Caco-2 (cell line): ENCODE measurements at regions of chr12 and their contacts with region 1.

Region 1: DNA sequence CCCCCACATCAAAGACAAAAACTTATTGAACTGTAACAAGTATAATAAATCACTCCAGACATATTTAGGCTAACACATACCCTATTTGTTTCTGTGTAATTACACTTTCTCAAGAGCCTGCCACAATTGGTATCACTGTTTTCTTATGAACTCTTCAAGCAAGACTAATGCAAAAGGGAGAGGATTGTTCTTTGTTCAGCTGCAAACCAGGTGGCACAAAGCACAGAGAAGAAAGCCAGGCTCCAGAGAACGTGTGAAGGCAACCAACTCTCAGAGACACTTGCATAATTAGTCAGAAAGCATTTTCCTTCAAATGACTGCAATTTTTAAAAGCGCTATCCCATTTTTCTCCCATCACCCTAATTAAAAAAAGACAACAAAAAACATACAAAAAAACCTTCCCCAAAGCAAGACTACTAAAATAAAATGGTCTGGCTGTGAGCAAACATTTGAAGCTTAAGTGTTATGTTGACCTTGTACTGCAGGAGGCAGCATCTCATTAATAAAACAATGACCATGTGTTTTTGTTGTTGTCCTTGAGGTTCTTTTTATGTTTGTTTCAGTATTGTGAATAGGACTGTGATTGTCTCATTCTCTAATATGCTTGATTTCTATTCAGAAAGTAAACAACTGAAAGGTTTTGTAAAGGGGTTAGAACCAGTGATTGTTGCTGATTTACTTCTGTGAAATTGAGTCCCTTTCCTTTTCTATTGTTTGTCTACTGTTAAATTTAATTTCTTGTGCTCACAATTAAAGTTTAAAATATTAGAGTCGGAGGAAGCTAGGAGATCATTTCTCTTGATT is 452.7 kb upstream of the PDE3A start:
- DNase-seq: peak in 1 of 2 experiments; percentile 20
- H3K4me3 ChIP-seq: no peak overlapping the region
- H3K4me3 Mint-ChIP-seq: no peak overlapping the region
- H3K27ac Mint-ChIP-seq: no peak overlapping the region
- H3K4me1 ChIP-seq: no peaks in the 10 kb centered on the region
- H3K4me1 Mint-ChIP-seq: peaks cover 20% of the 10 kb centered on the region
- H3K27me3 ChIP-seq: no peaks in the 10 kb centered on the region
- H3K27me3 Mint-ChIP-seq: no peaks in the 10 kb centered on the region
- CTCF ChIP-seq: peak; percentile 22 to 78

Region 2: GRCh38 chr12:19739183-19739776 is 176.3 kb before region 1 on chr12:
- CTCF ChIA-PET with region 1: no interaction called
- POLR2A ChIA-PET with region 1: no interaction called
- intact Hi-C with region 1: loop called (anchors 2 kb)
- DNase-seq: peak in 1 of 2 experiments; percentile 59
- H3K4me3 ChIP-seq: no peak overlapping the region
- H3K4me3 Mint-ChIP-seq: no peak overlapping the region
- H3K27ac Mint-ChIP-seq: no peak overlapping the region
- H3K4me1 ChIP-seq: no peaks in the 10 kb centered on the region
- H3K4me1 Mint-ChIP-seq: no peaks in the 10 kb centered on the region
- H3K27me3 ChIP-seq: no peaks in the 10 kb centered on the region
- H3K27me3 Mint-ChIP-seq: peaks cover 4% of the 10 kb centered on the region
- CTCF ChIP-seq: peak; percentile 72 to 77

Region 3: DNA sequence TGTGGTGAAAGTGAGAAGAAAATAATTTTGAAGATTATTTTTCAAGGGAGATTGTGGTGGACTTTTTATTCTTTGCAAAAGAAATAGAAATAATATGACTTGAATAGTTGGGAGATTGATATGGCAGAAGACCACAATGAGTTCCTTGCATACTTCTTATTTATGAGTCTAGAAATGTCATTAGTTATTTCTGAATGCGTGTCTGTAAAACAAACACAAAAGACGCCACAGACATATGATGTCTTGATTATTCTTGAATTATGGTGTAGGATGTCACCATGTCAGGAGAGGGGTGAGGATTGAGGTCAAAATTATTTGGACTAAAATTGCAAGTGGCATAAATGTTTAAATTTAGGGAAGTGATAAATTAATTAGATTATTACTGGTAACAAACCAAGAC is 12.1 kb after region 1 on chr12:
- CTCF ChIA-PET with region 1: no interaction called
- POLR2A ChIA-PET with region 1: no interaction called
- intact Hi-C with region 1: loop called (anchors 1 kb)
- DNase-seq: no peak
- H3K4me3 ChIP-seq: no peak overlapping the region
- H3K4me3 Mint-ChIP-seq: no peak overlapping the region
- H3K27ac Mint-ChIP-seq: no peak overlapping the region
- H3K4me1 ChIP-seq: no peaks in the 10 kb centered on the region
- H3K4me1 Mint-ChIP-seq: no peaks in the 10 kb centered on the region
- H3K27me3 ChIP-seq: no peaks in the 10 kb centered on the region
- H3K27me3 Mint-ChIP-seq: no peaks in the 10 kb centered on the region
- CTCF ChIP-seq: no peak

Region 4: GRCh38 chr12:20120328-20120695 is 204.7 kb after region 1 on chr12:
- CTCF ChIA-PET with region 1: no interaction called
- POLR2A ChIA-PET with region 1: no interaction called
- intact Hi-C with region 1: loop called (anchors 5 kb)
- DNase-seq: no peak
- H3K4me3 ChIP-seq: no peak overlapping the region
- H3K4me3 Mint-ChIP-seq: no peak overlapping the region
- H3K27ac Mint-ChIP-seq: no peak overlapping the region
- H3K4me1 ChIP-seq: no peaks in the 10 kb centered on the region
- H3K4me1 Mint-ChIP-seq: no peaks in the 10 kb centered on the region
- H3K27me3 ChIP-seq: no peaks in the 10 kb centered on the region
- H3K27me3 Mint-ChIP-seq: peaks cover 3% of the 10 kb centered on the region
- CTCF ChIP-seq: no peak

Region 5: DNA sequence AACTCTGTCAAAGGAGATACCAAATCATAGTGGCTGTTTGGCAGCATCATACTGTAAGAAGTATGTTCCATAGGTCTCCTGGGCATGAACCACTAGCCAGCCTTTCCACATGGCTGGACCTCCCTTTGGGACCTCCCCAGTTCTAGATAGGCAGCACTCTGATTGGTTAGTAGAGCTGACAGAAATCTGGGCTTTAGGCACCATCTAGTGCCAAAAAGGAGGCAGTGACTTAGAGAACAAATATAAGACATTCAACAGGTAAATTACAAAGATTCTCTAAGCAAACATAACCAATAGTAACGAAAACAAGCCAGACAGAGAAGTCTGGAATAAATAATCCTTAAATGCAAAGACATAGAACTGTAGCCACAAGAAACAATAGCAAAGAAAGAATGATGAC is 304.7 kb after region 1 on chr12:
- CTCF ChIA-PET with region 1: interaction called, 5 read pairs
- POLR2A ChIA-PET with region 1: no interaction called
- intact Hi-C with region 1: loop called (anchors 1 kb)
- DNase-seq: peak; percentile 46 to 47
- H3K4me3 ChIP-seq: no peak overlapping the region
- H3K4me3 Mint-ChIP-seq: no peak overlapping the region
- H3K27ac Mint-ChIP-seq: no peak overlapping the region
- H3K4me1 ChIP-seq: no peaks in the 10 kb centered on the region
- H3K4me1 Mint-ChIP-seq: no peaks in the 10 kb centered on the region
- H3K27me3 ChIP-seq: no peaks in the 10 kb centered on the region
- H3K27me3 Mint-ChIP-seq: no peaks in the 10 kb centered on the region
- CTCF ChIP-seq: peak; percentile 41 to 53

Region 6: DNA sequence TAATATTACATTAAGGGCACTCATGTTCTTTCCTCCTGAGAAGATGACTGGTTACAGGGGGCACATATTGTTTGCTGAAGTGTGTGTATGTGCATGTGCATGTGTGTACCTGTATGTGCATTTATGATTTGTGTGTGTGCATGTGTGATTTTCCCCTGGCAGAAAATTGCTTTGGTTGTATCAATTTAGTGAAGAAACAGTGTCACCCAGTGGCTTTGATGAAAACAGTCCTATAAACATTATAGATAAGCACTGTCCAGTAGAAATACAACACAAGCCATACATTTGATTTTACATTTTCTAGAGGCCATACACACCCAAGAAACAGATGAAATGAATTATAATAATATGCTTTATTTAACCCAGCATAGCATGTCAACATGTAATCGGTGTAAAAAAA is 461.4 kb after region 1 on chr12:
- CTCF ChIA-PET with region 1: no interaction called
- POLR2A ChIA-PET with region 1: no interaction called
- intact Hi-C with region 1: loop called (anchors 1 kb)
- DNase-seq: peak in 1 of 2 experiments; percentile 22
- H3K4me3 ChIP-seq: no peak overlapping the region
- H3K4me3 Mint-ChIP-seq: no peak overlapping the region
- H3K27ac Mint-ChIP-seq: no peak overlapping the region
- H3K4me1 ChIP-seq: peaks cover 4% of the 10 kb centered on the region; the same call in 1 of the 2 replicates
- H3K4me1 Mint-ChIP-seq: no peaks in the 10 kb centered on the region
- H3K27me3 ChIP-seq: no peaks in the 10 kb centered on the region
- H3K27me3 Mint-ChIP-seq: peaks cover 11% of the 10 kb centered on the region
- CTCF ChIP-seq: peak; percentile 14 to 54